ENCODE measurements at regions of chr14 and their contacts with region 1.

Region 1: DNA sequence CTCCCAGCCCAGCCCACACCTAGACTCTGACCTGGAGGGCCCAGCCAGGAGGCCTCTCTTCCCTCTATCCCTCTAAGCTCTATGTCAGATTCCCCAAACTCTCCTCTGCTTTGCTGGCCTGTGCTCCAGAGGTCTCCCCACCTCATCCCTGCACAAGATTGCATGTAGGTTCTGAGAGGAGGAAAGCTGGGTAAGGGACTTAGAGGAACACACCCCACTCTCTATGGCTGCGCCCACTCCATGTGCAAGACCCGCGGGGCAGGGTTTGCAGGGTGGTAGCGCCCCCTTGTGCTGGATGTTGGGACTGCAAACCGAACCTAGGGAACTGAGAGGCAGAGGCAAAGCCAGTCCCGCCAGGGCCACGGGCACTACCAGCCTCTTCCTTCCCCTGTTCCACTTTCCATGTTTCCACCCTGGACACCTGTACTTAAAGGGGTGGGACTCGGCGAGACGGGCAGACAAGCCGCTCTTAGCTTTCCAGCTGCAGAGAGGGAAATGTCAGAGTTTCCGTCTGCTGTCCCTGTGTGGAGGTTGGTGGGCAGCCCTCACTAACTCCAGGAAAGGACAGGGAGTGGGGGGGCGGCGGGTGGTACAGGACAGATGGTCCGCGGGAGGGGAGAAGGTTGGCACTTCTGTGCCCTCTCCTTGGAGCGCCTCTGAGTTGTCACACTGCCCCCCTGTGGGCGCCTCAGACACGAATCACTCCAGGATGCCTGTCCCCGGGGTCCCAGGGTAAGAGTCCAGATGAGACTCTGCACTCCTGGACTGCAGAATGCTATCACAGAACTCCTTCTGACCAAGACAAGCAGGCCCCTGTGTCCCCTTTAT is 16.8 kb downstream of the MMP14 start:
- DNase-seq: peak; percentile 63
- ATAC-seq: peak; percentile 91
- H3K4me3 ChIP-seq: peak overlapping the region; percentile 40 to 53
- H3K27ac ChIP-seq: peak overlapping the region; percentile 42; the same call in 1 of the 2 replicates
- H3K4me1 ChIP-seq: peaks cover 3 to 19% of the 10 kb centered on the region in 2 experiments; a peak in 2 of 4 replicates
- H3K27me3 ChIP-seq: no peaks in the 10 kb centered on the region
- CTCF ChIP-seq: peak; percentile 92 to 93 (median 92)
- POLR2A ChIP-seq: no peak
- RAD21 ChIP-seq: peak; percentile 96

Region 2: GRCh38 chr14:22556990-22557623 is 296.0 kb before region 1 on chr14:
- CTCF ChIA-PET with region 1: interaction called, 8 read pairs
- POLR2A ChIA-PET with region 1: no interaction called
- RAD21 ChIA-PET with region 1: interaction called in 1 of 2 experiments, 3 read pairs
- intact Hi-C with region 1: loop called (anchors 1 kb)
- DNase-seq: peak; percentile 48
- ATAC-seq: peak; percentile 92
- H3K4me3 ChIP-seq: 0 out of 4 replicates have a peak overlapping the region, but pooled peaks of 1 of the 2 experiments have one; percentile 23
- H3K27ac ChIP-seq: no peak overlapping the region
- H3K4me1 ChIP-seq: peaks cover 5 to 24% of the 10 kb centered on the region in 2 experiments
- H3K27me3 ChIP-seq: no peaks in the 10 kb centered on the region
- CTCF ChIP-seq: peak; percentile 95 to 100 (median 99)
- POLR2A ChIP-seq: no peak
- RAD21 ChIP-seq: peak; percentile 96

Region 3: GRCh38 chr14:22570132-22570949 is 282.8 kb before region 1 on chr14:
- CTCF ChIA-PET with region 1: interaction called, 41 read pairs
- POLR2A ChIA-PET with region 1: no interaction called
- RAD21 ChIA-PET with region 1: no interaction called
- intact Hi-C with region 1: loop called (anchors 1 kb)
- DNase-seq: peak; percentile 79
- ATAC-seq: peak; percentile 87
- H3K4me3 ChIP-seq: no peak overlapping the region
- H3K27ac ChIP-seq: peak overlapping the region; percentile 48; the same call in 1 of the 2 replicates
- H3K4me1 ChIP-seq: peaks cover 6 to 24% of the 10 kb centered on the region in 2 experiments; a peak in 2 of 4 replicates
- H3K27me3 ChIP-seq: no peaks in the 10 kb centered on the region
- CTCF ChIP-seq: peak; percentile 77 to 94 (median 92)
- POLR2A ChIP-seq: no peak
- RAD21 ChIP-seq: peak; percentile 84

Region 4: DNA sequence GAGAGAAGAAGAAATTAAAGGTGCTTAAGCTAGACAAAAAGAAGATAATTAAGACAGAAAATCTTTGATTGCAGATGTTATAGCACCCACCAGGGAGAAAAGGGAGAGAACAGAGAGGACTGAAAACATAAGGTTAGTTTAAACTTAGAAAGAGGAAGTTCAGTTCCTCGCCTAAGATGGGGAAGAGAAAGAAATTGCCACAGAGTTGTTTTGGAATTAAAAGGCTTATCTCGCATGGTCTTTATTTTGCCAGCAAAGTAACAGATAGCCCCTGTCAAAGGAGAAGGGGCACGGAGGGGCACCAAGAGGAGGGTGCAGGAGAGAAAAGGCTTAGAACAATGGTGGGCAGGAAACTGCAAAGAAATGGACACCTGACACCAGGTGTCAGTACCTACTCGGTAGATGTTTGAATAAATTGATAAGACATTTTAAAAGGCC is 104.5 kb before region 1 on chr14:
- CTCF ChIA-PET with region 1: no interaction called
- POLR2A ChIA-PET with region 1: no interaction called
- RAD21 ChIA-PET with region 1: no interaction called
- intact Hi-C with region 1: no loop called
- DNase-seq: no peak
- ATAC-seq: no peak
- H3K4me3 ChIP-seq: no peak overlapping the region
- H3K27ac ChIP-seq: no peak overlapping the region
- H3K4me1 ChIP-seq: no peaks in the 10 kb centered on the region
- H3K27me3 ChIP-seq: no peaks in the 10 kb centered on the region
- CTCF ChIP-seq: no peak
- POLR2A ChIP-seq: no peak
- RAD21 ChIP-seq: 0 out of 2 replicates have a peak, but pooled peaks have one; percentile 24

Region 5: GRCh38 chr14:22766456-22767322 is 86.5 kb before region 1 on chr14 and contains the start of gene OXA1L:
- CTCF ChIA-PET with region 1: no interaction called
- POLR2A ChIA-PET with region 1: interaction called, 4 read pairs
- RAD21 ChIA-PET with region 1: no interaction called
- intact Hi-C with region 1: loop called (anchors 2 kb)
- DNase-seq: peak; percentile 95
- ATAC-seq: peak; percentile 80
- H3K4me3 ChIP-seq: peak within 1 kb of the TSS; percentile 87 to 96
- H3K27ac ChIP-seq: peak within 1 kb of the TSS; percentile 71
- H3K4me1 ChIP-seq: peaks cover 4 to 19% of the 10 kb centered on the region in 2 experiments; a peak in 3 of 4 replicates
- H3K27me3 ChIP-seq: no peaks in the 10 kb centered on the region
- CTCF ChIP-seq: no peak
- POLR2A ChIP-seq: peak; percentile 95
- RAD21 ChIP-seq: no peak
- total RNA-seq, gene OXA1L: 146 TPM

Region 6: DNA sequence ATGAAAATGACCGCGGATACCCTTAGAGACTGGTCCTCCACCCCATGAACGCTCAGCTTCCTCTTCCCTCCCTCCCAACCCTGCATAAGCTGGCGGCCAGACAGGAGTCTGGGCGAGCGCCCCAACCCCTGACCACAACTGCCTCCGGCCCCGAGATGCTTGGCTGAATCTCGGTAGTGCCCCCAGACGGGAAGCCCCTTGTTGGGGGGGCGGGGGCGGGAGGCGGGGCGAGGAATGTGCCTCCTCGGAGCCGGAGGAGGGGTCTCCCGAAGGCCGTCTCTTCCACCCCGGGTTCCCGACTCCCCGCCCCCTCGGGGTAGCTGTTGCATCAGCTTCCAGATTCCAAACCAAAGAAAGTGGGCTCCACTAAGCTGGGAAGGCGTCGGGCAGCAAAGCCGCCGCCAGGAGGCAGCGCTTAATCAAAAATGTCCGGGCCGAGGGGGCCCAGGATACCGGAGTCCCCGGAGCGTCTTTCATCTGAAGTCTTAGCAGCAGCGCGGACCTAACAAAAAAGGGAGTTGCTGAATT is 30.5 kb before region 1 on chr14:
- CTCF ChIA-PET with region 1: interaction called, 38 read pairs
- POLR2A ChIA-PET with region 1: interaction called, 3 read pairs
- RAD21 ChIA-PET with region 1: interaction called, 4 to 8 read pairs
- intact Hi-C with region 1: loop called (anchors 1 kb)
- DNase-seq: peak; percentile 51
- ATAC-seq: peak; percentile 86
- H3K4me3 ChIP-seq: peak overlapping the region; percentile 29 to 43
- H3K27ac ChIP-seq: no peak overlapping the region
- H3K4me1 ChIP-seq: peaks cover 7 to 35% of the 10 kb centered on the region in 2 experiments
- H3K27me3 ChIP-seq: no peaks in the 10 kb centered on the region
- CTCF ChIP-seq: peak; percentile 81 to 89 (median 87)
- POLR2A ChIP-seq: no peak
- RAD21 ChIP-seq: peak; percentile 88

Region 7: DNA sequence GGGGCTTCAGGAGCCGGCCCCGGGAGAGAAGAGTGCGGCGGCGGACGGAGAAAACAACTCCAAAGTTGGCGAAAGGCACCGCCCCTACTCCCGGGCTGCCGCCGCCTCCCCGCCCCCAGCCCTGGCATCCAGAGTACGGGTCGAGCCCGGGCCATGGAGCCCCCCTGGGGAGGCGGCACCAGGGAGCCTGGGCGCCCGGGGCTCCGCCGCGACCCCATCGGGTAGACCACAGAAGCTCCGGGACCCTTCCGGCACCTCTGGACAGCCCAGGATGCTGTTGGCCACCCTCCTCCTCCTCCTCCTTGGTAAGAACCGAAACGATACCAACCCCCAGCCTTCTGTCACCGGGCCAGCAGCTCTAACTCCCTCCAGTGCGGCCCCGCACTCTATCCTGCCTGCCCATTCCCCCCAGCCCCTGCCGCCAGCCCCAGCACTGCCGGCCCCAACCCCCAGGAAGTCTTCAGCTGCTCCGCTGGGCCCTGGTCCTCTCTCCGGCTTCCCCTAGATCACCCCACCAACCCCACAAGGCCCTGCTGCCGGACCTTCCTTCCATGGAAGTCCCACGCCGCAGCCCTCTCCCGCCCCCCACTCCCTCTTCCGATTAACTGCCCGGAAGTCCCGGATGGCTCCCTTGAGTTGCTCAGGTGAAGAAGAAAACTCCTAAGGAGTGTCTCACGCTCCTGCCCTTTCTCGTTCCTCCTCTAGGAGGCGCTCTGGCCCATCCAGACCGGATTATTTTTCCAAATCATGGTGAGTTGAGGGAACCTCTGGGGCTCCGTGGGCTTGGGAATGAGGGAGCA is 19.1 kb after region 1 on chr14:
- CTCF ChIA-PET with region 1: interaction called, 15 read pairs
- POLR2A ChIA-PET with region 1: no interaction called
- RAD21 ChIA-PET with region 1: interaction called in 1 of 2 experiments, 3 read pairs
- intact Hi-C with region 1: no loop called
- DNase-seq: peak; percentile 64
- ATAC-seq: peak; percentile 69
- H3K4me3 ChIP-seq: peak overlapping the region; percentile 71 to 89
- H3K27ac ChIP-seq: peak overlapping the region; percentile 98
- H3K4me1 ChIP-seq: peaks cover 14 to 28% of the 10 kb centered on the region in 2 experiments
- H3K27me3 ChIP-seq: no peaks in the 10 kb centered on the region
- CTCF ChIP-seq: peak; percentile 84 to 98 (median 98)
- POLR2A ChIP-seq: no peak
- RAD21 ChIP-seq: peak; percentile 79